Right cardiac atrium (tissue), 5 donors: ENCODE measurements at regions of chr6 and their contacts with region 1.

Region 1: DNA sequence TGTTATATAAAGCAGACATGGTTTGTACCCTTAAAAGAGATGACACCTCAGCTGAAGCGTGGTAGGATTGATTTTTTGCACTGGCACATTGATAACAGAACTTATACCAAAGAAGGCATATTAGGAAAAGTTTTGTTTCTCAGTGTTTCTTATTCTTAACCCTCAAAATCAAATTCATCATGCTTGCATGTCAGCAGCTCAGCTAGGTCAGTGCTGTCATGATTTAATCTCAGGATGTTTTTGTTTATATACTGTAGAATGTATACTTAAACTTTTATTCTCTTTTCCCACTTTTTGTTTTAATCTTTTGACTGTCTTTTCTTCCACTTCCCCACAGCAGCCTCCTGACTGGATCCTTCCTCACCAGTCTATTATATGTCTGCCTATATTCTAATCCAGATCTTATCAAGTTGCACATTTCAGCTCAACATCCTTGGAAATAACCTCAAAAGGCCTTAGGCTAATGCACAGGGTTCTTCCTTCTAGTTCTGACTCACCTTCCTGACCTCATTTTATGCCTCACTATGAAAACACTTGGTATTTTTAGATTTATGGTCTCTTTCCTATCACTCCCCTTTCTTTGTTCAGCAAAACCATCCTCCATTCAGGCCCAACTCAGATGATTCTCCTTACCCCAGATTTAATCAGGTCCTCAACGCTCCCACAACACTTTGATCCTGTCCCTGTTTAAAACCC is 7.1 kb downstream of the HEBP2 start:
- DNase-seq: no peak
- ATAC-seq: peak in 1 of 2 donors; percentile 49
- H3K4me3 ChIP-seq: no peak overlapping the region
- H3K27ac ChIP-seq: no peak overlapping the region
- H3K4me1 ChIP-seq: no peaks in the 10 kb centered on the region
- H3K27me3 ChIP-seq: no peaks in the 10 kb centered on the region

Region 2: GRCh38 chr6:138078491-138078890 is 332.6 kb before region 1 on chr6:
- intact Hi-C with region 1: no loop called
- DNase-seq: no peak
- ATAC-seq: no peak
- H3K4me3 ChIP-seq: no peak overlapping the region
- H3K27ac ChIP-seq: no peak overlapping the region
- H3K4me1 ChIP-seq: no peaks in the 10 kb centered on the region
- H3K27me3 ChIP-seq: no peaks in the 10 kb centered on the region

Region 3: GRCh38 chr6:138773177-138774091 is 362.3 kb after region 1 on chr6 and contains the start of gene CCDC28A:
- intact Hi-C with region 1: loop called in 1 of 4 experiments (anchors 10 kb)
- DNase-seq: peak; percentile 95 to 98 (median 97)
- ATAC-seq: peak; percentile 97 to 98
- H3K4me3 ChIP-seq: peak within 1 kb of the TSS; percentile 69
- H3K27ac ChIP-seq: peak within 1 kb of the TSS; percentile 100
- H3K4me1 ChIP-seq: peaks cover 3% of the 10 kb centered on the region
- H3K27me3 ChIP-seq: no peaks in the 10 kb centered on the region
- total RNA-seq, gene CCDC28A: 6.7 to 11.6 (median 9.7) TPM